ENCODE measurements at regions of chr17 and their contacts with region 1.

Region 1: GRCh38 chr17:78360371-78361224 is 721 bp upstream of the SOCS3 start:
- DNase-seq: peak; percentile 97
- H3K4me3 Mint-ChIP-seq: peak overlapping the region; percentile 73
- H3K27ac Mint-ChIP-seq: peak overlapping the region; percentile 89
- H3K4me1 Mint-ChIP-seq: peaks cover 37% of the 10 kb centered on the region
- H3K27me3 Mint-ChIP-seq: peaks cover 5% of the 10 kb centered on the region

Region 2: DNA sequence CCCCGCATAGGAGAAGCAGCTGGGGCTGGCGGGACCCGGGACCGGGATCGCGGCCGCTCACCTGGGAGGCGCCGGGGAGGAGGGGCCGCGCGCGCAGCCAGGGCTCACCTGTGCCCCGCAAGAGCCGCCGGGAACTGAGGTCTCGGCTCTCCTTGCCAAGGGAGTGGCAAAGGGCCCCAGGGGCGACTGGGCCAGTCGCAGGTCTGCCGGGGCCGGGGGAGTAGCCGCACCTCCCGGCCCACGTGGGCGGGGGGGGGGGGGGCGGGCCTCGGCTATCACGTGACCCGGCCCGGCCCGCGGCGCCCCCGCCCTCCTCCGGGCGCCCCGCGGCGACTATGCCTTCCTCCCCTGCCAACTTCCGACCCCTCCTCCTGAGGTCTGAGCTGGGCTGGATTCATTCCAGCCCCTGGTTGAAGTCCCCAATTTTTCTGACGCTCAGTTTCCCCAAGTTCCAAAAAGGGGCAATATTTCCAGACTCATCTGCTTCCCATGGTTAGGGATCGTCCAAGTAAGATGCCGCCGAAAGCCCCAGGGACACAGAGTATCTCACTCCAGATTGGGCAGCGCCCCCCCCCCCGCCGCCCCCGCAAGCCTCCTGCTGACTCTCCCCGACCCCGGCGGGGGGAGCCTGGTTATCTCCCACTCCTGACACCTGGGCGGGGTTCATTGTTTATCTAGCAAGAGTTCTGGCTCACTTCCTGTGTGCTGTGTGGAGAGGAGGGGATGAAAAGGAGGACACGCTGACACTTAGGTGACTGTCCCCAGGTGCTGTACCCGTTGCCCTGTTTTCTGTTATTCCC is 231.8 kb before region 1 on chr17 and contains the start of gene TMC6:
- CTCF ChIA-PET with region 1: no interaction called
- intact Hi-C with region 1: loop called (anchors 5 kb)
- DNase-seq: peak; percentile 85
- H3K4me3 Mint-ChIP-seq: peak within 1 kb of the TSS; percentile 96
- H3K27ac Mint-ChIP-seq: peak within 1 kb of the TSS; percentile 98
- H3K4me1 Mint-ChIP-seq: peaks cover 50% of the 10 kb centered on the region
- H3K27me3 Mint-ChIP-seq: no peaks in the 10 kb centered on the region
- total RNA-seq, gene TMC6: 79.0 to 85.6 TPM

Region 3: GRCh38 chr17:78258323-78259191 is 102.0 kb before region 1 on chr17:
- CTCF ChIA-PET with region 1: interaction called, 3 read pairs
- intact Hi-C with region 1: loop called (anchors 1 kb)
- DNase-seq: peak; percentile 95
- H3K4me3 Mint-ChIP-seq: peak overlapping the region; percentile 81
- H3K27ac Mint-ChIP-seq: peak overlapping the region; percentile 88
- H3K4me1 Mint-ChIP-seq: peaks cover 59% of the 10 kb centered on the region
- H3K27me3 Mint-ChIP-seq: no peaks in the 10 kb centered on the region

Region 4: DNA sequence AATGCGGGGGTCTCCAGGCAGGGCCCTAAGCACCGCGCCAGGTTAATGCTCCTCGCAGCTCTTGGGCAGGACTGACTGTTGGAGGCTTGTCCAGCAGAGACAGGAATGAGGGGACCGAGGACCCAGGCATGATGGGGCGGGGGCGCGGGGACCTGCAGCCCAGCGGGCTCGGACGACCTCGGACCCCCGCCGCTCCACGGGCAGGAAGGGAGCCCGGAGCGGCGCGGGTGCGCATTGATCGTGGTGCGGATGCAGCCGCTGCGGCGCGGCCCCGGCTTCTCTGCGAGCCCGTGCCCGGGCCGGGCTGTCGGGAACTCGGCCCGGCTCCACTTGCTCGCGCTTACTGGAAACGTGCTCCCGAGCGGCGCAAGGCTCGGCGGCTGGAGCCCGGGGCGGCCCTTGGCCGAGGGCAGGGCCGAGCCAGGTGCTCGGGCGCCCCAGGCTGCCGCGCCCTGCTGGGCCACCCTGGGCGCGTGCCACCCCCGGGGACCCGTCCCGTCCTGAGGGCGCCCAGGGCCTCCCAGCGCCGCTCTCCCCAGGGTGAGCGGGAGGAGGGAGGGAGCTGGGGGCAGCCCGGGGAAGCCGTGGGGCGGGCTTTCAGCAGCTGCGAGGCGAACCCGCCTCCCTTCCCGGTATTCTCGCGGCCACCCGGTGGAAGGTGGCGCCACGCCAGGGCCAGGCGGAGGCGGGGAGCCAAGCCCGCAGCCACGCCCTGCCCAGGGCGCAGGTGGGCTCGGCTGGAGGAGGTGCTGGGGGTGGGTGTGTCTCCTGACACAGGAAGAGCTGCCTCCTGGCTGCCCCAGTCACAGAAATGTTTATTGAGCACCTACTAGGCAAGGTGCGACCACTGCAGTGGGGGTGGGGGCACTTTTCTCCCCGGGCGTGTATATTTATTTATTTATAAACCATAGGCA is 46.6 kb before region 1 on chr17:
- CTCF ChIA-PET with region 1: interaction called, 6 read pairs
- intact Hi-C with region 1: loop called (anchors 1 kb)
- DNase-seq: peak; percentile 89
- H3K4me3 Mint-ChIP-seq: peak overlapping the region; percentile 58
- H3K27ac Mint-ChIP-seq: peak overlapping the region; percentile 90
- H3K4me1 Mint-ChIP-seq: peaks cover 41% of the 10 kb centered on the region
- H3K27me3 Mint-ChIP-seq: no peaks in the 10 kb centered on the region

Region 5: DNA sequence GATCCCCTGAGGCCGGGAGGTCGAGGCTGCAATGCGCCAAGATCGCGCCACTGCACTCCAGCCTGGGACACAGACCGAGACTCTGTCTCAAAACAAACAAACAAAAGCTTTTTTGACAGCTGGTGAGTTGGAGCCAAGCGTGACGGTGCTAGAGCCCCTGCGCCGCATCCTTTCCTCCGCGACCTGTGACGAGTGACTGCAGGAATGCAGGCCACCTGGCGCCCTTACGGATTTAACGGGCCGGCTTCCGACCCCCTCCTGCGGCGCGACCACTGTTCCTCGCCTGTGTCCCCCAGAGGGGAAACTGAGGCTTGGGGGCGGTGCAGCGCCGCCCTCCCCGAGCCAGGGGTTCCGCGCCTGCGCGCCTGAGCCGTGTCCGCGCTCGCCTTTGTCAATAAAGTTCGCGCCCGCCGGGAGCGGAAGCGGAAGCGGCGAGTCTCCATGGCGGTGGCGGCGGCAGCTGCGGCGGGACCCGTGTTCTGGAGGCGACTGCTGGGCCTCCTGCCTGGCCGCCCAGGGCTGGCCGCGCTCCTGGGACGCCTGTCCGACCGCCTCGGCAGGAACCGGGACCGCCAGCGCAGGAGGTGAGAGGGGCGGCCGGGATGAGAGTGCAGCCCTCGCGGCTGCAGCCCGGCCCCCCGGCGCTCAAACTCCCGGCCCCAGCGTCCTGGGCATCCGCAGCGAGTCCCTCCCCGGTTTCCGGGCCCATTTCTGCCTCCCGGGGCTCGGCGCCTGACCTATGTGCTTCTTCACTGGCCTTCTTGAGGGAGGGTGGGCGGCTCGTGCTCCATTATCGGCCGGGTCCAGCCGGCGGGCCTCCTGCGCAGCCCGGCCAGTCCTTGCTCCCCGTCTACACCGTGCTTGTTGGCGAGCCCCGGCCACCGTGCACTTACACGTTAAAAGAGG is 17.9 kb after region 1 on chr17 and contains the start of gene PGS1:
- CTCF ChIA-PET with region 1: interaction called, 35 read pairs
- intact Hi-C with region 1: loop called (anchors 1 kb)
- DNase-seq: peak; percentile 86
- H3K4me3 Mint-ChIP-seq: peak within 1 kb of the TSS; percentile 93
- H3K27ac Mint-ChIP-seq: peak within 1 kb of the TSS; percentile 99
- H3K4me1 Mint-ChIP-seq: peaks cover 63% of the 10 kb centered on the region
- H3K27me3 Mint-ChIP-seq: no peaks in the 10 kb centered on the region
- total RNA-seq, gene PGS1: 69.0 to 73.1 TPM

Region 6: DNA sequence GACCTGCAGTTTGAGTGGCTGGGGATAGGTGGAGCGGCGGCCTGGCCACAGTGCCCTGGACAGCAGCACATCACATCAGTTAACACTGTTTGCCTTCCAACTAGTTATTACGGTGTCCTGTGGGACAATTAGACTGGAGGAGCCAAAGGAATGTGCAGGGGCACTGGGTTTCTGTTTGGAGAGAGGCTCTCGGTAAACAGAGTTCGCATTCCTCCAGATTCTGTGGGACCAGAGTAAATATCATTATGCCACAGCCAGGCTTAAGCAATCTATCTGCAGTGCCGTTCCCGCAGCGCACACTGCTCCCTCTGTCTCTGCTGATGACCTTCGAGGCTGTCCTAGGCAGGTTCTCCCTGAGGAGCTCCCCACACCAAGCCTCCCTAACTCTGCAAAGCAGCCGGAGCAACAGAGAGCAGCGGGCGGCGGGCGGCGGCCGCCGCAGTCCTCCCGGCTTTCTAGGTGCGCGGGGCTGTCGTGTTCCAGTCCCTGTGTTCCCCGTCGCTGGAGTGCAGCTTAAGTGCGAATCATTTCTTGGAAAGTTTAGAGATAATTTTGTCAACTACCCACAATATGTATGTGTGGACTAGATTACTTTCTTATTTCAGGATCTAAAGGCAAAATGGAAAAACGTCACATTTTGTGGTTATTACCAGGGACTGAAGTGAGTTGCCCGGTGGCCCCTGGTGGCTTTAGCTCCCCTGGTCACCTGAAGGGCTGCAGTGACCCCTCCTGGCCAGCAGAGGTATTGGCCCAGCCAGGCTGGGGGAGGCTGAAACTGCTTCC is 61.1 kb after region 1 on chr17:
- CTCF ChIA-PET with region 1: interaction called, 35 read pairs
- intact Hi-C with region 1: loop called (anchors 1 kb)
- DNase-seq: peak; percentile 85
- H3K4me3 Mint-ChIP-seq: no peak overlapping the region
- H3K27ac Mint-ChIP-seq: peak overlapping the region; percentile 70
- H3K4me1 Mint-ChIP-seq: peaks cover 45% of the 10 kb centered on the region
- H3K27me3 Mint-ChIP-seq: no peaks in the 10 kb centered on the region

Region 7: DNA sequence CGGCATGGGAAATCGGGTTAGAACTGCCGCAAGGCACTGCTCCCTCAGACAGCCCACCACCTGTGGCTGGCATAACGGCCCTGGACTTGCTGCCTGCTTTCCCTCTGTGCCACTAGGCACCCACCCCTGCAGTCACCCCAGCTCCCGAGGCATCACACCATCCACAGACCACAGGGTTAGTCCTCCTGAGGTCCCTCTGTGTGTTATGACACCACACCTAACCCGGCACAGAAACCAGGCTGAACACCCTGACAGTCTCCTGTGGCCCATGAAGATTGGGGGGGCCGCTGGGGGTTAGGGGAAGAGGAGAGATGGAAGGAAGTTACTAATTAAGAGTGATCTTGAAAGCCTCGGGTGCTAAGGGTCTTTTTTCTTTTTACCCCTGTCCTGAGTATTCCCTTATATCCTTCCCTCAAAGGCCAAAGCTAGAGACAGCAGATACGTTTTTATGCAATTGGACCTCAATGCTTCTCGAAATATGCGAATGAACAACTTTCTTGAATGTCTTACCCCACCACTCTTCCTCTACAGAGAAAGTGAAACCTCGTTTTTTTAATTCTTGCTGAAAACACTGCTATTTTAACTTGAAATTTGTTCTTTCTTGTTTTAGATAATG is 414.5 kb after region 1 on chr17:
- CTCF ChIA-PET with region 1: no interaction called
- intact Hi-C with region 1: loop called (anchors 5 kb)
- DNase-seq: peak; percentile 86
- H3K4me3 Mint-ChIP-seq: peak overlapping the region; percentile 82
- H3K27ac Mint-ChIP-seq: peak overlapping the region; percentile 97
- H3K4me1 Mint-ChIP-seq: peaks cover 65% of the 10 kb centered on the region
- H3K27me3 Mint-ChIP-seq: no peaks in the 10 kb centered on the region